ENCODE measurements at regions of chr13 and their contacts with region 1.

Region 1: DNA sequence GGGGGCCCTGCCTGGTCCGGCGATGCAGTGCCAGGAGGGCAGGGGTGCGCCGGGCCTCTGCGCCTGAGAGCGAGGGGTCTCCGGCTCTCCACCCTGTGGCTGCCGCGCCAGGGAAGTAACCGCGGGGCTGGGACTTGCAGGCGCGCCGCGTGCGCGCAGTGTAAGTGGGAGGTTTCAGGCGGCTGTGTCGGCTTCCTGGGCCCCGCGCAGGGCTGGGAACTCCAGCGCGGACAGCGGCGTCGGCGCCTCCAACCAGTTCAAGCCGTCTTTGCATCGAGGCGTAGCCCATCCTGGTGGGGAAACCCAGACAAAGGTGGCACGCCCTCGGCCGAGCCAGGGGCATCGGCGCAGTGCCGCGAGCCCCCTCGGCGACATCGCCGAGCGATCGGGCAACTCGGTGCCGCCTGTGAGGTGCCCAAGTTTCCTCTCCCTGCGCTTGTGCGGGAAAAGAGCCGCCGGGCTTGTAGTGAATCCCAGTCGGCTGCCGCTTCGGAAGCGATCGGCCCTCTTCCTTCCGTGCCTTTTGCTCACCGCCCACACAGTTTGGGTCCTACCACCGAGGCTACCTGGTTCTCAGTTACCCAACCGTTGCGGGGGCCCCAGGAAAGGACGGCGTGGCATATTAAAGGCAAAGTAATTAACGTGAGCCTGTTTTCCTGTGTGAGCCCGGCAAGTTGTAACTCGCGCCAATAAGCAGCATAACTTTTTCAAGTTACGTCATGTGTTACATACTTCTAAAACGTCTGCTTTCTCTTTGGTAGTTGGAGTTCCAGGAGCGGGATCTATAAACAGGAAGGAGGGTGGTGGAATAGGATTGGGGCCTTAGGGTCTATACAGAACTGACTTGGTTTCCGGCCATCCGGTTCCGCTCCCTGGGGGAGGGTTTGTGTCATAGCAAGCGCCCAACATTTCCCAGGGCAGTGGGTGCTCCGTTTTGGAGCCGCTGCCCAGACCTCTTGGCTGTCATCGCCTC is 1.2 kb downstream of the LRCH1 start:
- DNase-seq: peak in 7 of 10 donors; percentile 35 to 69 (median 57)
- H3K4me3 ChIP-seq: peak overlapping the region; percentile 40 to 92 (median 82)
- H3K27ac ChIP-seq: peak overlapping the region in 58 of 59 donors; percentile 13 to 95 (median 88)
- H3K27me3 ChIP-seq: peaks cover 0 to 23% (median 0%) of the 10 kb centered on the region in 45 donors
- CTCF ChIP-seq: peak in 7 of 56 donors; percentile 7 to 30 (median 14)

Region 2: GRCh38 chr13:46031581-46032263 is 522.5 kb before region 1 on chr13:
- intact Hi-C with region 1: no loop called
- DNase-seq: no peak
- H3K4me3 ChIP-seq: no peak overlapping the region
- H3K27ac ChIP-seq: no peak overlapping the region
- H3K27me3 ChIP-seq: no peaks in the 10 kb centered on the region
- CTCF ChIP-seq: no peak

Region 3: DNA sequence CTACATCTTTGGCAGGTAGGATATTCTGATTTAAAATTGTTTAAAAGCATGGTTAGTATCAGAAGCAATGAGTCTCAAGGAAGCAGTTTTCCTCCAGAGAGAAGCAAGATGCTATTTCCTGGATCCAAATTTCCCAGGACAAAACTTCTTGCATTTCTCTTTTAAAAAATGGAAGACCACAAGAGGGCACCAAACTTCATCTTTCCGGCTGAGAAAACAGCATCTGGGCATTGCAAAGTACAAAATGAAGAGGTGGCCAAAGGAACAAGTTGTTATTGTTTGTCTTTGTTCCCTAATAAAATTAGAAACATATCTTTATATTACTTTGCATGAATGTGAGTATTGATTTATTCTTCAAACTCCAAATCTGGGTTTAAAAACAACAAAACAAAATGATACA is 61.2 kb before region 1 on chr13:
- intact Hi-C with region 1: loop called in 1 of 2 experiments (anchors 2 kb)
- DNase-seq: peak in 1 of 10 donors; percentile 28
- H3K4me3 ChIP-seq: no peak overlapping the region
- H3K27ac ChIP-seq: no peak overlapping the region
- H3K27me3 ChIP-seq: peaks cover 0 to 9% (median 0%) of the 10 kb centered on the region in 45 donors
- CTCF ChIP-seq: peak; percentile 56 to 94 (median 76)

Region 4: DNA sequence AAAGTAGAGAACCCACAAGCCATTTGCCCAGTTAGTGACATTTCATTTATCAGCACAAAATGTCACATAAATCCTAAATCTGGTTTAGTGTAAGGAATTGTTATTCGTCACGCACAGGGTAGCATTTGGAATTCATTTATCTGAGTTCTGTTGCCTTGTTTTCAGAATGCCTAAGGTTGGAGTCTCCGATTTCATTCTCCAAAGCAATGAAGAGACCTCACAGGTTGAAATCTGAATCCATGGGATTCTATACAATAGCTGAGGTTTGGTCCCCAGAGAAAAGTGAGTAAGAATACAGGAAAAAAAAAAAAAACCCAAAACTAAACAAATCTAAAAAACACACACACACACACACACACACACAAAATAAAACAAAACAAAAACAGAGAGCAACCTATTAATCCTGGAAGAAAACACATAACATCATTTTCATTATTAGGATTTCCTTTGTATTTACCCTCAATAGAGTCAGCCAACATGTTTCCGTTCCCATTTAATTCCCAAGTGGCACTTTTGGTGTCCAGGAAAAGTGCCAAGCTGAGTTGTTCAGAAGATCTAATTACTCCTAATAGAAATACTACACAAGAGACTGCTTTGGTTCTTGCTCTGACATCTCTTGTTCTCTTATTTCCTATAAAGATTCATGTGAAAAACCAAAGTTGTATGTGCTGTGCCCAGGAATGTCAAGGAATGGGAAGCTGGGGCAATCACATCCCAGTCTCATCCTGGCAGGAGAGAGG is 37.4 kb before region 1 on chr13:
- intact Hi-C with region 1: no loop called
- DNase-seq: no peak
- H3K4me3 ChIP-seq: no peak overlapping the region
- H3K27ac ChIP-seq: no peak overlapping the region
- H3K27me3 ChIP-seq: peaks cover 0 to 40% (median 0%) of the 10 kb centered on the region in 45 donors
- CTCF ChIP-seq: no peak

Region 5: DNA sequence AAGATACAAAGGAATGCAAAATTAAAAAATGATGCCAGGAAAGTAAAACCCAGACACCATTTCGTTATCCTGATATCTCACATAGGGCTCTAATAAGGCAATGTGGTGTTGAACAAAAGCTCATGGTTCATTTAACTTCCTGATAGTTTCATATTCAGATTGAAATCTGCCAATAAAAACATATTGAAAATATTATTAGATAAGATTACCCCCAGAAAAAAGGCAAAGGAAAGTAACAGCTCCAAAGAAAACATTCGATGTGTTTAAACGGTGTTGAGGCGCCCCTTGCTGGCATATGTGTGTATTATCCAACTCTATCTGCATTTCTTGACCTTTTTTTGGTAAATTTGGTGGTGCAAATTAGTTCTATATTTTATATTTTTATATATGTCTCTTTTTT is 166.9 kb after region 1 on chr13:
- intact Hi-C with region 1: loop called (anchors 5 to 10 kb)
- DNase-seq: peak in 5 of 10 donors; percentile 22 to 66 (median 44)
- H3K4me3 ChIP-seq: no peak overlapping the region
- H3K27ac ChIP-seq: no peak overlapping the region
- H3K27me3 ChIP-seq: peaks cover 0 to 4% (median 0%) of the 10 kb centered on the region in 45 donors
- CTCF ChIP-seq: peak; percentile 45 to 93 (median 75)

Measured in dorsolateral prefrontal cortex (tissue), 120 donors.